HCT116 (cell line): ENCODE measurements at regions of chr9 and their contacts with region 1.

Region 1: DNA sequence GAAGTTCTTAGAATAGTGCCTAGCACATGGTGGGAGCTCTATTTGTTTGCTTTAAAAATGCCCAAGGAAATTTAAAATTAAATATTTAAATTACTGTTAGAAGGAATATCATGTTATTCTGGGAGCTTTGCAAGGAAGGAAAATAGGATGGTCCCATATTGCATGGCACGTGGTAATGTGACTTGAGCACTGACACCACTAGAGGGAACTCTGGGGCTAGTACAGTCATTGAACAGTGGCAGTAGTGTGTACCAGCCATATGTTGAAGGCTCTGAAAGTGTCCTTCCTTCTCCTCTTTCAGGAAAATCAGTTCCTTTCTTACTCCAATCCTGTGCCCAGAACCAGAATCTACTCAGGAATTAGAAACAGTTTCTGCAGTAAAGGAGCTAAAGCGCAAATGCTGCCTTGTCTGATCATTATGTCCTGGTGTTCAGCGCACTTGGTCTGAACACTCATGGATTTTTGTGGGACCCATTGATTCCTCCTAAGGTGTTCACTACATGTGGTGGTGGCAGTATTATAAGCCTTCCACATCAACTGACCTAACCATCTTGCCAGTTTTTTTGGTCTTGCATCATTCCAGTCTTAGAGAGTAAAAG is 54.1 kb downstream of the GDA start:
- DNase-seq: peak; percentile 28
- ATAC-seq: peak; percentile 98
- H3K4me3 ChIP-seq: no peak overlapping the region
- H3K27ac ChIP-seq: no peak overlapping the region
- H3K4me1 ChIP-seq: no peaks in the 10 kb centered on the region
- H3K27me3 ChIP-seq: no peaks in the 10 kb centered on the region
- CTCF ChIP-seq: peak; percentile 42 to 69 (median 63); a peak in 5 of 6 replicates
- POLR2A ChIP-seq: no peak
- RAD21 ChIP-seq: peak; percentile 56

Region 2: DNA sequence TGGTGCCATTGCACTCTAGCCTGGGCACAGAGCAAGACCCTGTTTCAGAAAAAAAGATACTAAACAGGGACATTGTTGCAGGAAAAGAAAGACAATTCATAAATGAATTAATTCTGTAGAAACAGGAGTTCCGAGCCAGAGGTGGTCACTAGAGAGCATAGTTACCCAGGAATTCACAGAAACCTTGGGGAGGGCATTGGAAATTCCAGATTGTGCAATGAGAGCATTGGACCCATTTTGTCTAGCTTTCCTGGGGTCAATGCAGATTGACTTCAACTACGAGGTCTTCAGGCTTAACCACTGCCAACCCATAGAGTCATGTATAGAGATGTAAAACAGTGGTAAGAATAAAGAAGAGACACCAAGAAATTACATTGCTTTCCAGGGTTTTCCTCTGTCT is 355.4 kb before region 1 on chr9:
- CTCF ChIA-PET with region 1: no interaction called
- POLR2A ChIA-PET with region 1: no interaction called
- RAD21 ChIA-PET with region 1: no interaction called
- intact Hi-C with region 1: no loop called
- DNase-seq: no peak
- ATAC-seq: no peak
- H3K4me3 ChIP-seq: no peak overlapping the region
- H3K27ac ChIP-seq: no peak overlapping the region
- H3K4me1 ChIP-seq: no peaks in the 10 kb centered on the region
- H3K27me3 ChIP-seq: no peaks in the 10 kb centered on the region
- CTCF ChIP-seq: no peak
- POLR2A ChIP-seq: no peak
- RAD21 ChIP-seq: no peak

Region 3: GRCh38 chr9:72827950-72828731 is 624.8 kb after region 1 on chr9:
- CTCF ChIA-PET with region 1: interaction called, 3 read pairs
- POLR2A ChIA-PET with region 1: no interaction called
- RAD21 ChIA-PET with region 1: no interaction called
- intact Hi-C with region 1: loop called (anchors 10 kb)
- DNase-seq: no peak
- ATAC-seq: peak; percentile 34; the same call in 1 of the 2 replicates
- H3K4me3 ChIP-seq: no peak overlapping the region
- H3K27ac ChIP-seq: no peak overlapping the region
- H3K4me1 ChIP-seq: peaks cover 5 to 10% of the 10 kb centered on the region in 2 experiments
- H3K27me3 ChIP-seq: no peaks in the 10 kb centered on the region
- CTCF ChIP-seq: no peak
- POLR2A ChIP-seq: no peak
- RAD21 ChIP-seq: no peak